Ovary (tissue), 10 donors: ENCODE measurements at regions of chr11 and their contacts with region 1.

Region 1: DNA sequence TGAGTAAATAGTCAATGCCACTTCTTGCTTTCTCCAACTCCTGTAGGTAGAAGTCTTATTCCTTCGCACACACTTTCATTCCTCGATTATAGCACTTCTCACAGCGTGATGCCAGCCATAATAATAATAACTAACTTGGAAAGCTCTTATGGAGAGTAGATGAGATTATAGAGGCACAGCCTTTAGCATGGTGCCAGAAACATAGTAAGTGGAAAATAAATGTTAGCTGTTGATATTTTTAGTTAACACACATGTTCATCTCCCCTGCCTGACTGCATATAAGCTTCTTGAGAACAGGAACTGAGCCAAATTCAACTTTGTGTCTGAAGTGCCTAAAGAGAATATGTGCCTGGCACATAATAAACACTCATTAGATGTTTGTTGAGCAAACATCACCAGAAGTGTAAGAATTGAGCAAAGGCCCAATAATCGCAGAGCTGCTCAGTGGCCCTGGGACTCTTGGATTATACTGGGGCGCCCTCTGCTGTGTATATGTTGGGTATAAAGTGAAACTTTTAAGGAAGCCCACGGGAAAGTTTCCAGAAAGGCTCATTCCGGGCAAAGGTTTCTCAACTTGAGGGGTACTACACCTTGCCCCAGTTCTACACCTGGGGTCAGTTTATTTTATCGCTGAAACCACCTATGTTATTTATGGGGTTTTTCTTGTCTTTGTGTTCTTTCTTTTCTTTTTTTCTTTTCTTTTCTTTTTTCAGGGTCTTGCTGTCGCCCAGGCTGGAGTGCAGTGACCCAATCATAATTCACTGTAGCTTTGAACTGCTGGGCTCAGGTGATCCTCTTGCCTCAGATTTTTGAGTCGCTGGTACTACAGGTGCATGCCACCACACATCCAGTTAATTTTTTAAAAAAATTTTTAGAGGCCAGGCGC is 22.3 kb downstream of the SLN start:
- DNase-seq: peak; percentile 23 to 57 (median 32)
- H3K4me3 ChIP-seq: no peak overlapping the region
- H3K27ac ChIP-seq: no peak overlapping the region
- H3K4me1 ChIP-seq: no peaks in the 10 kb centered on the region
- H3K27me3 ChIP-seq: no peaks in the 10 kb centered on the region
- CTCF ChIP-seq: peak in 1 of 3 donors; percentile 8
- EP300 ChIP-seq: no peak
- POLR2A ChIP-seq: no peak

Region 2: GRCh38 chr11:107583629-107584195 is 105.8 kb before region 1 on chr11:
- intact Hi-C with region 1: loop called in 1 of 4 experiments (anchors 10 kb)
- DNase-seq: no peak
- H3K4me3 ChIP-seq: no peak overlapping the region
- H3K27ac ChIP-seq: no peak overlapping the region
- H3K4me1 ChIP-seq: no peaks in the 10 kb centered on the region
- H3K27me3 ChIP-seq: no peaks in the 10 kb centered on the region
- CTCF ChIP-seq: no peak
- EP300 ChIP-seq: no peak
- POLR2A ChIP-seq: no peak